Head of caudate nucleus (tissue), 42 donors: ENCODE measurements at regions of chr5 and their contacts with region 1.

Region 1: GRCh38 chr5:180071531-180072255 is at the start of gene RNF130:
- DNase-seq: peak; percentile 79 to 97 (median 92)

Region 2: GRCh38 chr5:179235416-179236400 is 836.0 kb before region 1 on chr5:
- intact Hi-C with region 1: no loop called
- DNase-seq: peak in 8 of 42 donors; percentile 1 to 19 (median 6)

Region 3: GRCh38 chr5:179895842-179896241 is 175.9 kb before region 1 on chr5:
- intact Hi-C with region 1: no loop called
- DNase-seq: no peak

Region 4: DNA sequence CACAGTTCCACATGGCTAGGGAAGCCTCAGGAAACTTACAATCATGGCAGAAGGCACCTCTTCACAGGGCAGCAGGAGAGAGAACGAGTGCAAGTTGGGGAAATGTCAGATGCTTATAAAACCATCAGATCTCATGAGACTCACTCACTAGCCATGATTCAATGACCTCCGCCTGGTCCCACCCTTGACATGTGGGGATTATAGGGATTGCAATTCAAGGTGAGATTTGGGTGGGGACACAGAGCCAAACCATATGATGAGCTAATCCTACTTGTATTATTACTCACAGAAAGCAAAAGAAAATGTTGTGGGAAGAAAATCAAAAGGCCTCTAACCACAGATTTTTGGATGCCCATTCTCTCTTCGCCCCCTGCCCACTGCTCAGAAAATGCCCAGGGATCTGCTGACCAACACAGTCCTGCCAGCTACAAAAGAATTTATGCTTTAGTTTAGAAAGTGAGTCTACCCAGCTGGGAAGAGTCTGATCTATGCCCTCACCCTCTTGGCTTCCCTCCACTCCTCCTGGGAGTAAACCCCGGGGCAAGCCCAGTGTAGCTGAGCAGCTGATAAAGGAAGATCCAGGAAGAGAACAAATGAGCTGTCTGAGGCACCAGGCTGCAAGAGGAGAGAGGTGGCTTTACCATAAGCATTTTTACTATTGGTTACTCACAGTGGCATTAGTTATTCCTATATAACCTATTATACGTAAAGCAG is 53.2 kb before region 1 on chr5:
- intact Hi-C with region 1: loop called (anchors 10 kb)
- DNase-seq: no peak

Region 5: GRCh38 chr5:180059326-180059725 is 12.4 kb before region 1 on chr5:
- intact Hi-C with region 1: no loop called
- DNase-seq: no peak